GM12878 (cell line): ENCODE measurements at regions of chr15 and their contacts with region 1.

Region 1: DNA sequence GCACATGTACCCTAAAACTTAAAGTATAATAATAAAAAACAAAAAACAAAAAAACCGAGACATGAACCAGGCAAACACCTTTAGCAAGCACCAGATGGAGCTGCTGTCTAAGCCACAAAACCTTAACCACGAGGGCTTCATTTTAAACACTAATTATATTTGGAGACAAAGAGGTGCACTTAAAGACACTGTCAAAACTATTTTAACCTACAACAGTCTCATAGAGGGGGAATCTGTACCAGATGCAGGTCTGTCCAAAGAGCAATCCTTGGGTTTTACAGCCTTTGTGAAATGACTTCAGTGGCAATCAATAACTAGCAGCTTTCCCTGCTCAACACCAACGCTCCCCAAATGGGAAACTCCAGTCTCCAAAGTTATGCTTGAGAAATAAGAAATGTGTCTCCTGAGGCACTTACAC is 115.7 kb upstream of the TSPAN3 start:
- DNase-seq: peak; percentile 39
- ATAC-seq: peak; percentile 32
- H3K4me3 ChIP-seq: no peak overlapping the region
- H3K27ac ChIP-seq: peak overlapping the region; percentile 59
- H3K4me1 ChIP-seq: peaks cover 61% of the 10 kb centered on the region
- H3K27me3 ChIP-seq: no peaks in the 10 kb centered on the region
- CTCF ChIP-seq: peak; percentile 64 to 73 (median 67)
- EP300 ChIP-seq: no peak
- POLR2A ChIP-seq: no peak
- RAD21 ChIP-seq: peak; percentile 95

Region 2: GRCh38 chr15:77059786-77060361 is 126.7 kb before region 1 on chr15:
- CTCF ChIA-PET with region 1: no interaction called
- POLR2A ChIA-PET with region 1: no interaction called
- RAD21 ChIA-PET with region 1: no interaction called
- SMC1A ChIA-PET with region 1: no interaction called
- in situ Hi-C with region 1: no loop called
- intact Hi-C with region 1: no loop called
- DNase-seq: peak; percentile 34
- ATAC-seq: peak; percentile 83
- H3K4me3 ChIP-seq: peak overlapping the region; percentile 50
- H3K27ac ChIP-seq: peak overlapping the region; percentile 55
- H3K4me1 ChIP-seq: peaks cover 12% of the 10 kb centered on the region
- H3K27me3 ChIP-seq: no peaks in the 10 kb centered on the region
- CTCF ChIP-seq: no peak
- EP300 ChIP-seq: no peak
- POLR2A ChIP-seq: no peak
- RAD21 ChIP-seq: no peak

Region 3: DNA sequence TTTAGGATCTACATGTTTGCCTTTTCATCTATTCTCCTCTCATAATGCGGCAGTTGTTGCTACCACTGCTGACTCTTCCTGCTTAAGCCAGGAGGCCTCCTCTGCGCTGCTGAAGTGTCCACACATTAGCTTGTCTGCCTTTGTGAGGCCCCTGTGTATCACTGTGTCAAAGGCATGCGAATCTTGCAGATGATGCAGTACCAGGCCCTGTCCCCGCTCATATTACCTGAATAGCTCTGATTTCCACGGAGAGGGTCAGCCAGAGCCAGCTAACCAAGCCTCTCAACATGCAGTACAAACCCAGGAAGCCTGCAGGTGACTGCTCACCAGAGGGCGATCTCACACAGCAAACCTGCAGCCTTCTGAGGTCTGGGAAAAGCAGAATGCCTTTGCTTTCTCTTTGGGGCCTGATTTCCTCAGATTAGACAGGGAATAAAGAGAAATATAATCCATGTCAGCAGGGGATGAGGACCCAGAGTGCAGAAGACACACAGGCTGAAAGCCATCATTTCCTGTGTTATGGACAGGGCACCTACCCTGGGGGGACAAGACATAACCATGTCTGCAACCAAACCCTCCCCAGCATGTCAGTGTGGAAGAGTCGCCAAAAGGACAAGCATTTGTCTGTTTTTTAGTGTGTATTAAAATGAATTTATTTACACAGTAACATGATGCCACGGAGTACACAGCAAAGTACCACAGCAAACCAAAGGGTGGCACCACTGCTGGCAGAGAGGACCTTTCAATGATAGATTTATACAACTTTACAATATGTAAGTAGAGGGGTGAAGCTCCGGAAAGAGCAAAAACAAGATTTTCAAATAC is 78.9 kb before region 1 on chr15:
- CTCF ChIA-PET with region 1: interaction called, 25 read pairs
- POLR2A ChIA-PET with region 1: interaction called, 3 read pairs
- RAD21 ChIA-PET with region 1: interaction called, 4 read pairs
- SMC1A ChIA-PET with region 1: interaction called, 12 read pairs
- in situ Hi-C with region 1: no loop called
- intact Hi-C with region 1: no loop called
- DNase-seq: no peak
- ATAC-seq: peak; percentile 82
- H3K4me3 ChIP-seq: no peak overlapping the region
- H3K27ac ChIP-seq: no peak overlapping the region
- H3K4me1 ChIP-seq: no peaks in the 10 kb centered on the region
- H3K27me3 ChIP-seq: no peaks in the 10 kb centered on the region
- CTCF ChIP-seq: peak; percentile 61 to 76 (median 69)
- EP300 ChIP-seq: no peak
- POLR2A ChIP-seq: no peak
- RAD21 ChIP-seq: peak; percentile 78

Region 4: DNA sequence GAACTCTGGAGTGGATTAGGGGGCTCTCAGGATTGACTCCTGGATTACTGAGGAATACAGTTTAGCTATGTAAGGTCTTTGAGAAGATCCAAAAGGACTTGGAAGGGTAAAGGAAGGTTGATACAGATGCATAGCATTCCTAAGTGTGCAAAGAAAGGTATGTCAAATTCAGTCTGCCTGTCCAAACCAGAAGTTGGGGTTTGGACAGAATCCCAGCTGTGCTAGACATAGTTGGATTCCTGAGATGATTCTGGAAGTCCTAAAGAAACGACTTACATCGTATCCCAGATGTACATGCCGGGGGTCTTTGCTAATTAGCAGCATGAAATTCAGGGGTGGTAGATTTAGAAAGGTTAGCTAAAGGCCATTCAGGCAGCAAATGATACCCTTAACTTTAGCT is 18.0 kb before region 1 on chr15:
- CTCF ChIA-PET with region 1: interaction called, 10 read pairs
- POLR2A ChIA-PET with region 1: interaction called, 7 read pairs
- RAD21 ChIA-PET with region 1: interaction called, 5 read pairs
- SMC1A ChIA-PET with region 1: interaction called, 25 read pairs
- in situ Hi-C with region 1: no loop called
- intact Hi-C with region 1: no loop called
- DNase-seq: no peak
- ATAC-seq: no peak
- H3K4me3 ChIP-seq: no peak overlapping the region
- H3K27ac ChIP-seq: no peak overlapping the region
- H3K4me1 ChIP-seq: no peaks in the 10 kb centered on the region
- H3K27me3 ChIP-seq: no peaks in the 10 kb centered on the region
- CTCF ChIP-seq: no peak
- EP300 ChIP-seq: no peak
- POLR2A ChIP-seq: no peak
- RAD21 ChIP-seq: no peak

Region 5: DNA sequence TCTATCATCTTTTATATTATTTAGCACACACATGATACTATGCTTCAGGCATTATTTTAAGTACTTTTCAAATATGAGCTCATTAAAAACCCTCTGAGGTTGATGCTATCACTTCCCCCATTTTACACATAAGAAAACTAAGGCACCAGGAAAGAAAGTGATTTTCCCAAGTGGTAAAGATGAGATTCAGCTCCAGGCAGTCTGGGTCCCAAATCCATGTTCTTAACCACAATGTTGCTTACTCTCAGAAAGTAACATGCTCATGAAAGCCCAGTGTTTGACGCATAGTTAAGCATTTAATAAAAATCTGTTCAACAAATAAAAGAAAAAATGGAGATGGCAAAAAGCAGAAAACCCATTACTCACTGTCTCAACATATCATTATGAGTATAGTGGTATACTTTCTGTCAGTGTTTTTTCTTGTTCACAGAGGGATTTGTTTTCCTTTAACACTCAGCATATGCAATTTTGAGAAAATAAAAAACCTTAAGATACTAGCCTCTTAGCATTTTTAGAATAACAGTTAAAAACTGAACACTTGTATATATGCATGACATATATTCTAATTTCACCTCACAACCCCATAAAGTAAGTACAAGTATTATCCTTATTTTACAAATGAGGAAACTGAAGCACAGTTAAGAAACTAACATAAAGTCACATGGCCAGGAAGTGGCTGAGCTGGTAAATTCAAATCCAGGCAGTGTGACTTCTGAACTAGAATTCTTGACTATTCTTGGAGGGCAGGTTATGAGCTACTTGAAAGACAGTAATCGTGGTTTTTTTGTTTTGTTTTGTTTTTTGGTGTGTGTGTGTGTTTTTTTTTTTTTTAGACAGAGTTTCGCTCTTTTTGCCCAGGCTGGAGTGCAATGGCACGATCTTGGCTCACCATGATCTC is 222.9 kb after region 1 on chr15:
- CTCF ChIA-PET with region 1: interaction called, 25 read pairs
- POLR2A ChIA-PET with region 1: interaction called, 17 read pairs
- RAD21 ChIA-PET with region 1: interaction called, 116 read pairs
- SMC1A ChIA-PET with region 1: interaction called, 140 read pairs
- in situ Hi-C with region 1: no loop called
- intact Hi-C with region 1: no loop called
- DNase-seq: peak; percentile 51
- ATAC-seq: peak; percentile 83
- H3K4me3 ChIP-seq: no peak overlapping the region
- H3K27ac ChIP-seq: peak overlapping the region; percentile 27
- H3K4me1 ChIP-seq: peaks cover 10% of the 10 kb centered on the region; the same call in 1 of the 2 replicates
- H3K27me3 ChIP-seq: no peaks in the 10 kb centered on the region
- CTCF ChIP-seq: no peak
- EP300 ChIP-seq: peak in 1 of 2 experiments; percentile 22; a peak in 1 of 4 replicates
- POLR2A ChIP-seq: no peak
- RAD21 ChIP-seq: no peak

Region 6: DNA sequence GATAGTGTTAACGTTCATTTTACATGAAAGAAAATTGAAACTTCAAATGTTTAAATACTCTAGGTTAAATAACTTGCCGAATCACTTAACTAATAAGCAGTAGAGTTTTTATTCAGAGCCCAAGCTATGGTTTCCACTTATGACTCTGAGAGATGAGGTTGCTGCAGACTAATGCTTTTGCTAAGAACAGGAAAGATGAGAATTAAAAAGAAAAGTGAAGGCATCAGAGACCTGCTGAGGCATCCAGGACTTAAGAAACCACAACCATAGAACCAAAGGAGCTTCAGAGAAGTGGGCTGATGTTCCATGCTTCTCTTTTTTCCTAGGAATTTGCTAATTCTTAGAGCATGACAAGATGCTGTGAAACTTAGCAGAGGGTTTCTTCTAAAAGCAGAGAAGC is 243.6 kb after region 1 on chr15:
- CTCF ChIA-PET with region 1: interaction called, 12 read pairs
- POLR2A ChIA-PET with region 1: no interaction called
- RAD21 ChIA-PET with region 1: interaction called, 15 read pairs
- SMC1A ChIA-PET with region 1: interaction called, 11 read pairs
- in situ Hi-C with region 1: no loop called
- intact Hi-C with region 1: no loop called
- DNase-seq: no peak
- ATAC-seq: peak; percentile 71
- H3K4me3 ChIP-seq: no peak overlapping the region
- H3K27ac ChIP-seq: peak overlapping the region; percentile 20
- H3K4me1 ChIP-seq: peaks cover 7% of the 10 kb centered on the region
- H3K27me3 ChIP-seq: no peaks in the 10 kb centered on the region
- CTCF ChIP-seq: no peak
- EP300 ChIP-seq: no peak
- POLR2A ChIP-seq: no peak
- RAD21 ChIP-seq: no peak

Region 7: GRCh38 chr15:77496710-77497103 is 310.1 kb after region 1 on chr15:
- CTCF ChIA-PET with region 1: interaction called, 411 read pairs
- POLR2A ChIA-PET with region 1: interaction called, 16 read pairs
- RAD21 ChIA-PET with region 1: interaction called, 279 read pairs
- SMC1A ChIA-PET with region 1: interaction called, 269 read pairs
- in situ Hi-C with region 1: loop called (anchors 5 kb)
- intact Hi-C with region 1: loop called (anchors 1 kb)
- DNase-seq: no peak
- ATAC-seq: peak; percentile 92
- H3K4me3 ChIP-seq: no peak overlapping the region
- H3K27ac ChIP-seq: no peak overlapping the region
- H3K4me1 ChIP-seq: peaks cover 20% of the 10 kb centered on the region
- H3K27me3 ChIP-seq: no peaks in the 10 kb centered on the region
- CTCF ChIP-seq: peak; percentile 89 to 96 (median 96)
- EP300 ChIP-seq: no peak
- POLR2A ChIP-seq: no peak
- RAD21 ChIP-seq: peak; percentile 95

Region 8: DNA sequence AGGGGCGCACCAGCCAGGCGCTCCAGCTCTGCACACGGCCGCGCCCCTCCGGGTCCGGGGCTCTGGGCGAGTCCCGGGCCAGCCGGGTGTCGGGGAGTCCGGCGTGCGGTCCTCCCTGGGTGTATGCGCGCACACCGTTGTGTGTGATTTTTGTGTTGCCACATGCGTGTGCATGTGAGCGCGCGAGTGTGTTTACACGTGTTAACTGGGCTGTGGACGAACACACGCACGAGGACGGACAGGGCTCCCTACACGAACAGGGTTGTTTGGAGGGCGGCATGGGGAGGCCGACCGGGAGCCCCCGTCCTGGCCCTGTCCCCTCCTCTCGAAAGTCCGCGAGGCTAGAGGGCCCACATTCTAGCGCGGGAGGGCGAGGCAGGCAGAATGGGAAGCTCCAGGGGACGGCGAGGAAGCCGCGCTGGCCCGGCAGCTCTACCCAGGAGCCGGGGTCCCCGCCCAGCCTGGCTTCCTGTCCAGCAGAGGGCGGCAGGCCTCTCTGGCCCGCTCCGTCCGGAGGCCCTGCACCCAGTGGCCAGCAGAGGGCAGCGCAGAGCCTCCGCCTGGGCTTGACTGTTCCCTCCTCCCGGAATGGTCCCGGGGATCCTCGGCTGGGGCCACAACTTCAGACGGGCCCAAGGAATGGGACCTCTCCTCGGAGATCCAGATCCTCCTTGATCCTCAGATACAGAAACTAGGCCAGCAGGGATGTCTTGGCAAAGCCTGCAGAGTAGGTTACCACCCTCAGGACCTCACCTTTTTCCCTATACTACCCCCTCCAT is 446.7 kb after region 1 on chr15:
- CTCF ChIA-PET with region 1: interaction called, 7 read pairs
- POLR2A ChIA-PET with region 1: no interaction called
- RAD21 ChIA-PET with region 1: no interaction called
- SMC1A ChIA-PET with region 1: interaction called, 3 read pairs
- in situ Hi-C with region 1: no loop called
- intact Hi-C with region 1: loop called (anchors 5 kb)
- DNase-seq: no peak
- ATAC-seq: peak; percentile 98
- H3K4me3 ChIP-seq: peak overlapping the region; percentile 29; the same call in 1 of the 2 replicates
- H3K27ac ChIP-seq: no peak overlapping the region
- H3K4me1 ChIP-seq: no peaks in the 10 kb centered on the region; the same call in 1 of the 2 replicates
- H3K27me3 ChIP-seq: peaks cover 16 to 18% of the 10 kb centered on the region in 2 experiments
- CTCF ChIP-seq: peak; percentile 99 to 100 (median 100); a peak in 5 of 6 replicates
- EP300 ChIP-seq: no peak
- POLR2A ChIP-seq: no peak
- RAD21 ChIP-seq: peak; percentile 63